CD4-positive, alpha-beta memory T cell (primary cell): ENCODE measurements at regions of chr11 and their contacts with region 1.

Region 1: DNA sequence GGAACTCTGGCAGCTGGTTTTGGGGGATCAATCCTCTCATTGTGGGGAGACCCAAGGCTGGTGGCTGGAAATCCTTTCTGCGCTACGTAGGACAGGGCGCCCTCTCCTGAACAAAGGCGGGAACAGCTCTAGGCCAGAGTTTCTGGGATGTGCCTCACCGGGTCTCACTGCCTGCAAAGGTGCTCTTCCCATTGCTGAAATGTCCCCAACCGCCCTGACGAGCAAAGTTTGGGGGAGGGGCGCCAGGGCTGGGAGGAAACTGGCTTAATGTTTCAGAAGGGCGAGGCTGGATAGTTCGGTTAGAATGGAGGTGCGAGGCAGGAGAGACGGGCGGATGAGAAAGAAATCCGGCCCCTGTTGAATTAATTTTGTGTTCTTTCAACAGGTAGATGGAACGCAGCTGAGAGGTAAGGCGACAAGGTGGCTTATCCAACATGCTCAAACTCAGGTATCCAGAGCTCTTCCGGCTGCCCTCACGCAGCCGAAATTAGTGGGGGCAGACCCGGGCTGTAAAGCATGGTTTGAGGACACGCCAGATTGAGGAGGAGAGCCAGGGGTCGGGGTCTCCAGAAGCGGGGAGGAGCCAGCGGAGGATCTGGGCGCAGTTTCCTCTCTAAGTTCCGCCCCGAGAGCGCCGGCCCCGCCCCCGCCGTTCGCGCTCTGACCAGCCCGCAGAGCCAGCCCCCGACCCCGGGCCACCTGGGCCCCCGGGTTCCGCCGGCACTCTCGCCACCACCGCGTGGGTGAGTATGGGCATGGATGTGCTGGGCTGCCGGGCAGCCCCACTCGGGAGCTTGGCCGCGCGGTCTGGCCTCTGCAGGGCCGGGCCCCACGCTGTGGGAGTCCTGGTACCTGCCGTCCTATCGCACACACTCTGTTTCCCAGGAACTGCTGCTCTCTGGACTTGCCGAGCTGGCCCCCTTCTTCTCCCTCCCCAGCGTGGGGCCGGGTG is at the start of gene PGAP2:
- DNase-seq: peak; percentile 42 to 62 (median 48)
- H3K4me3 ChIP-seq: peak within 1 kb of the TSS; percentile 81 to 85
- H3K4me3 Mint-ChIP-seq: peak within 1 kb of the TSS; percentile 92 to 99 (median 97)
- H3K27ac ChIP-seq: peak within 1 kb of the TSS; percentile 68
- H3K27ac Mint-ChIP-seq: peak within 1 kb of the TSS; percentile 82 to 99 (median 95)
- H3K4me1 ChIP-seq: peaks cover 10% of the 10 kb centered on the region
- H3K4me1 Mint-ChIP-seq: peaks cover 6 to 18% (median 14%) of the 10 kb centered on the region in 4 donors
- H3K27me3 ChIP-seq: no peaks in the 10 kb centered on the region
- H3K27me3 Mint-ChIP-seq: no peaks in the 10 kb centered on the region
- total RNA-seq, gene PGAP2: 18.4 to 20.7 TPM

Region 2: DNA sequence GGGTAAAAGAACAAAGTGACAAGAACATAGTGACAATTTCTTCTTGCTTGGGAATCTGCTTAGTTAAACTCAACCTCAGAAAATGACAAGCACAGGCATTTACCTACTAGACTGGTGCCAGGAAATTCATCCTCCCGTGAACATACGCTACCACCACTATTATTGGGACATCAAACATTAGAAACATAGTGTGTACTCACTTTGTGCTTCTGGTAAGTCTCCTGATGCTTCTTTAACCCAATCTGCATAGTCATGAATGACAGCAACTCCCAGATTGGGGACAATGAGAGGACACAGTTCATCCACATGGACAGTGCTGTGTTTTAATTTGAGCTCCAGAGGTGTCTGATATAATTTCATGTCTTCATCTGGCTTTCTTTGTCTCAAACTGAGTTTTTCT is 107.8 kb before region 1 on chr11:
- CTCF ChIA-PET with region 1: interaction called, 3 read pairs
- POLR2A ChIA-PET with region 1: no interaction called
- intact Hi-C with region 1: loop called (anchors 5 kb)
- DNase-seq: no peak
- H3K4me3 ChIP-seq: no peak overlapping the region
- H3K4me3 Mint-ChIP-seq: no peak overlapping the region
- H3K27ac ChIP-seq: no peak overlapping the region
- H3K27ac Mint-ChIP-seq: peak overlapping the region in 2 of 7 donors; percentile 22 to 43
- H3K4me1 ChIP-seq: no peaks in the 10 kb centered on the region
- H3K4me1 Mint-ChIP-seq: peaks cover 0 to 8% (median 0%) of the 10 kb centered on the region in 4 donors
- H3K27me3 ChIP-seq: no peaks in the 10 kb centered on the region
- H3K27me3 Mint-ChIP-seq: no peaks in the 10 kb centered on the region

Region 3: GRCh38 chr11:3775736-3776406 is 32.3 kb before region 1 on chr11:
- CTCF ChIA-PET with region 1: interaction called, 39 read pairs
- POLR2A ChIA-PET with region 1: interaction called, 5 read pairs
- intact Hi-C with region 1: loop called (anchors 5 kb)
- DNase-seq: no peak
- H3K4me3 ChIP-seq: no peak overlapping the region
- H3K4me3 Mint-ChIP-seq: no peak overlapping the region
- H3K27ac ChIP-seq: no peak overlapping the region
- H3K27ac Mint-ChIP-seq: no peak overlapping the region
- H3K4me1 ChIP-seq: no peaks in the 10 kb centered on the region
- H3K4me1 Mint-ChIP-seq: peaks cover 0 to 3% (median 1%) of the 10 kb centered on the region in 4 donors
- H3K27me3 ChIP-seq: no peaks in the 10 kb centered on the region
- H3K27me3 Mint-ChIP-seq: no peaks in the 10 kb centered on the region

Region 4: DNA sequence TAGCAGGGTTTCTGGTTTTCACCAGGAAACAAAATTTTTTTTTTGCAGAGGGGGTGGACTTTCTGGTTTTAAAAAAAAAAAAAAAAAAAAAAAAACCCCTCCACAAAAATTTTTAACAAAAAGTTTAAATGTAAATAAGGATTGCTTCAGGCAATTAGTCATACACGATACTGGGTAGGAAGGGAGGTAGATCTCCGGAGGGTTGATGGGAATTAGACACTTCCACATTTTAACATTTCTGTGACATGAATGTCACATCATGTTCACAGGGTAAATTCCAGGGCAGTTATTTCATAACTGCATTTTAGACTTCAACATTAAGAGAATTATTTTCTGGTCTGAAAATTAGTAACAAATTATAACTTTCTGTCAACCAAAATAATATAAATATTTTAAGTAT is 26.8 kb before region 1 on chr11:
- CTCF ChIA-PET with region 1: interaction called, 39 read pairs
- POLR2A ChIA-PET with region 1: interaction called, 4 read pairs
- intact Hi-C with region 1: loop called (anchors 1 kb)
- DNase-seq: no peak
- H3K4me3 ChIP-seq: no peak overlapping the region
- H3K4me3 Mint-ChIP-seq: no peak overlapping the region
- H3K27ac ChIP-seq: no peak overlapping the region
- H3K27ac Mint-ChIP-seq: peak overlapping the region in 4 of 7 donors; percentile 41 to 81 (median 66)
- H3K4me1 ChIP-seq: peaks cover 47% of the 10 kb centered on the region
- H3K4me1 Mint-ChIP-seq: peaks cover 27 to 48% (median 37%) of the 10 kb centered on the region in 4 donors
- H3K27me3 ChIP-seq: no peaks in the 10 kb centered on the region
- H3K27me3 Mint-ChIP-seq: no peaks in the 10 kb centered on the region

Region 5: GRCh38 chr11:3797329-3798095 is 10.7 kb before region 1 on chr11 and contains the start of gene NUP98:
- CTCF ChIA-PET with region 1: interaction called, 25 read pairs
- POLR2A ChIA-PET with region 1: interaction called, 67 read pairs
- intact Hi-C with region 1: loop called (anchors 1 kb)
- DNase-seq: peak; percentile 100
- H3K4me3 ChIP-seq: peak within 1 kb of the TSS; percentile 89 to 98
- H3K4me3 Mint-ChIP-seq: peak within 1 kb of the TSS; percentile 91 to 98 (median 96)
- H3K27ac ChIP-seq: peak within 1 kb of the TSS; percentile 99
- H3K27ac Mint-ChIP-seq: peak within 1 kb of the TSS; percentile 96 to 100 (median 99)
- H3K4me1 ChIP-seq: peaks cover 42% of the 10 kb centered on the region
- H3K4me1 Mint-ChIP-seq: peaks cover 26 to 61% (median 45%) of the 10 kb centered on the region in 4 donors
- H3K27me3 ChIP-seq: no peaks in the 10 kb centered on the region
- H3K27me3 Mint-ChIP-seq: no peaks in the 10 kb centered on the region
- total RNA-seq, gene NUP98: 109 to 112 TPM

Region 6: DNA sequence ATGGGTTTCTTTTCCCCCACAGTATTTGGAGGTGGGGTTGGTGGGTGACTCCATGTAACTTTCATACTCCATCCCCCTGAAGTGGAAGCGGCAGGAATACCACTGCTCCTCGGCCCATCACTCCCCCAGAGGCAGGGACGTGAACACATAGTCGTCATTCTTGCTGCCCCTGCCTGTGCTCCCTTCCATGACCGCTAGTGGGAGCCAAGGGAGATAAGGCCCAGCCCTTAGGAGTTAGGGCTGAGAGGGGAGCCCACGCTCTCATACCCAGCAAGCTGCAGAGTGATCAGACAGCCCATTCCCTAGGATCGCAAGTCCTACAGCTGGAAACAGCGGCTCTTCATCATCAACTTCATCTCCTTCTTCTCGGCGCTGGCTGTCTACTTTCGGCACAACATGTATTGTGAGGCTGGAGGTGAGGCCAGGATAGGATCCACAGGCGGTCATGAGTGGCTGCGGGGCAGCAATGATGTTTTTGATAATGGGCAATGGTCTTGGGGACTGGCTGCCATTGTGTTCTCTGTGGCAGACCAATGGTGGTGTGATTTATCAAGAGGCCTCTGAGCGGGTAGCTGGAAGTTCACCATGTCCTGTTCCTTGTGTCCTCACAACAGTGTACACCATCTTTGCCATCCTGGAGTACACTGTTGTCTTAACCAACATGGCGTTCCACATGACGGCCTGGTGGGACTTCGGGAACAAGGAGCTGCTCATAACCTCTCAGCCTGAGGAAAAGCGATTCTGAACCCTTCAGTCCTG is 16.7 kb after region 1 on chr11:
- CTCF ChIA-PET with region 1: interaction called, 36 read pairs
- POLR2A ChIA-PET with region 1: interaction called, 12 read pairs
- intact Hi-C with region 1: no loop called
- DNase-seq: peak; percentile 75 to 85 (median 78)
- H3K4me3 ChIP-seq: no peak overlapping the region
- H3K4me3 Mint-ChIP-seq: peak overlapping the region in 4 of 8 donors; percentile 13 to 50 (median 34)
- H3K27ac ChIP-seq: peak overlapping the region; percentile 22
- H3K27ac Mint-ChIP-seq: peak overlapping the region; percentile 79 to 94 (median 89)
- H3K4me1 ChIP-seq: peaks cover 20% of the 10 kb centered on the region
- H3K4me1 Mint-ChIP-seq: peaks cover 20 to 47% (median 32%) of the 10 kb centered on the region in 4 donors
- H3K27me3 ChIP-seq: no peaks in the 10 kb centered on the region
- H3K27me3 Mint-ChIP-seq: no peaks in the 10 kb centered on the region

Region 7: DNA sequence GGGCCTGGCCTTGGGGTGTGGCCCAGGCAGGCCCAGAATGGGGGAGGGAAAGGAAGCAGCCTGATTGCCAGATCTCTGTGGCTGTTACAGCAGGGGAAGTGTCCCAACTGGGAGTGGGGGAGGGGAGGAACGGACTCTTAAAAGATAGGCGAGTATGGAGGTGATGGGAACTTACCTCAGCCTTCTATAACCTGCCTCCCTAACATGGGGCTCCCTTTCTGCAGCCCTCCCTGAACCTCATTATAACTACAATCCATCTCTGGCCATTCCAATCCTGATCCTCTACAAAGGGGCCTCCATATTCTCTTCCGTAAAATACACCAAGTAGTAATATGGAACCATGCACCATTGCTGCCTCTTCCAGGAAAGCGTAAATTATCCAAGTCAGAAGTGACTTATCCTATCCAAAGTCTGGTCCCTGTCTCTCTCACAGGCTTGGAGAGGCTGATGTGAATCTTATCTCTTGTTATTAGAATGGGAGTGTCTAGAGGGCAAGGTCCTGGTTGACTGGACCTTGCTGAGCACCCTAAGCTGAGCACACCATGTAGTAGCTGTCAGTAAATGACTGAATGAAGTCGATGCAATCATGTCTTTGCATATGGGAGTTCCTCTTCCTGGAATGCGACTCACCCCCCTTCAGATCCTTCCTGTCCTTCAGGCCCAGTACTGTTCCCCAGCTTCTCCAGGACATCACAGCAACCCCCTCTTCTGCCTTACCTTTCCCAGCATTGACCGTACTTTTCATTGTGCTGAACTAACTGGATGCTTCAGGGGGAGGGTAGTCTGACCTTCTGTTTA is 26.7 kb after region 1 on chr11:
- CTCF ChIA-PET with region 1: interaction called, 29 read pairs
- POLR2A ChIA-PET with region 1: interaction called, 109 read pairs
- intact Hi-C with region 1: no loop called
- DNase-seq: no peak
- H3K4me3 ChIP-seq: peak overlapping the region; percentile 1 to 3
- H3K4me3 Mint-ChIP-seq: peak overlapping the region; percentile 62 to 95 (median 86)
- H3K27ac ChIP-seq: peak overlapping the region; percentile 57
- H3K27ac Mint-ChIP-seq: peak overlapping the region; percentile 85 to 99 (median 94)
- H3K4me1 ChIP-seq: peaks cover 92% of the 10 kb centered on the region
- H3K4me1 Mint-ChIP-seq: peaks cover 74 to 97% (median 85%) of the 10 kb centered on the region in 4 donors
- H3K27me3 ChIP-seq: no peaks in the 10 kb centered on the region
- H3K27me3 Mint-ChIP-seq: peaks cover 0 to 3% of the 10 kb centered on the region in 2 donors